Left ventricle myocardium superior (tissue), 1 donor: ENCODE measurements at regions of chr6 and their contacts with region 1.

Region 1: DNA sequence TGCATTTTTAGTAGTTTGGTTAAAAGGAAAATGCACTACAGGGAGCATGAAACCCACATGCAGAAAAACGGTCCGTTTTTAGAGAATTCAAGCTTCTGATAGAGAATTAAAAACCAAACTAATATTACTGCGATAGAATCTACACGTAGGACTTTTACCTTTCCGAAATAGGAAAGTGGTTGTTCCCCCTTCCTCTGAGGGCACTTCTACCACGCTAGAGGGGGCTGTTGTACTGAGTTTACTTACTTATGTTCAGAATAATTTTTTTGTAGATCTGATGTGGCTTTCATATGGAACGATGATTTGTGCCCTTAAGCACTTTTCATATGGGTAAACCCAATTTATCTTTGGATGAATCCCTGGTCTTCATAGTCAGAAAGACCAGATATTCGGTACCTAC is 264.3 kb upstream of the PLN start:
- DNase-seq: no peak
- ATAC-seq: peak; percentile 55

Region 2: GRCh38 chr6:118171852-118172251 is 111.9 kb before region 1 on chr6:
- intact Hi-C with region 1: no loop called
- DNase-seq: no peak
- ATAC-seq: no peak

Region 3: DNA sequence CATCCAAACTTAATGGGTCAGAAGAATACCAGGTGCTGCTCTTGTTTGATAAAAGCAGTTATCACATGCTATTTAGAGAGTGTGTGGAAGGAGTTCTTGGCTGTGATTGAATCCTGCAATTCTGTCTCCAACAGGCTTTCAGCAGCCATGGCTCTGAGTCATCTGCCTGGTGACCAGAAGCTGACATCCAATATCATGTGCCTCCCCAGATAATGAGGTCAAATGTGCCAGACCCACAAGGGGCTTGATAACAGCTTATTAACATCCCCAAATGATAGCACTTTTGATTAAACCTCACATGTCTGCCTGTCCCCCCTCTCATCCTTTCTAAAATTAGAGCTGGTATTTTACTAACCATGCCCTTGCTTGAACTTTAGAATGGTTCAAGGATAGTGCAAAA is 88.6 kb after region 1 on chr6:
- intact Hi-C with region 1: loop called (anchors 2 kb)
- DNase-seq: peak; percentile 60
- ATAC-seq: peak; percentile 92

Region 4: DNA sequence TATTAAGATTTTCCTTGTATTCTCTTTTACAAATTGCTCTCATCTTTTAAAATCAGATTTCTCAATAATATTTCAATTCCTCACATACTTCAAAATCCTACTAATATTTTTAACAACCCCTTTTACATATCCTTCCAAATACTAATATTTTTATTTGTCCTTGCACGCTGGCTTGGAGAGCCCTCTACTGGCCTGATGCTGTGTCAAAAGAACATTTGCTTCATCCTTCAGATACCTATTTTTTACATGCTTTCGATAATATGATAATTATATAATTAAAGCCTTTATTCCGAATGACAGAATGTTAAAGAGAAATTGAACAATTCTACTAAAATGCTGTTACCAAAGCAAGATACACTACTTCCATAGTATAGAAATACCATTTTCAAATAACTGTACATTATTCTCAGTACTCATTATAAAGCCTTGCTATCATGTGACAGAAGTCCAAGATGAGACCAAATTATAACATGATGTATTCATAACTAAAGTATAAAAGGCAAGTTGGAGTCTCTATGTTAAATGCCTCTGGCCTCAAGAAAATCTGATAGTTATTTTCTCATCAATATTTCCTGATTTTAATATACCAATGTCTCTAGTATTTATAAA is 225.3 kb after region 1 on chr6:
- intact Hi-C with region 1: loop called (anchors 1 kb)
- DNase-seq: peak; percentile 45
- ATAC-seq: peak; percentile 27

Region 5: GRCh38 chr6:118551063-118552053 is 267.6 kb after region 1 on chr6:
- intact Hi-C with region 1: loop called (anchors 5 kb)
- DNase-seq: no peak
- ATAC-seq: peak; percentile 55

Region 6: DNA sequence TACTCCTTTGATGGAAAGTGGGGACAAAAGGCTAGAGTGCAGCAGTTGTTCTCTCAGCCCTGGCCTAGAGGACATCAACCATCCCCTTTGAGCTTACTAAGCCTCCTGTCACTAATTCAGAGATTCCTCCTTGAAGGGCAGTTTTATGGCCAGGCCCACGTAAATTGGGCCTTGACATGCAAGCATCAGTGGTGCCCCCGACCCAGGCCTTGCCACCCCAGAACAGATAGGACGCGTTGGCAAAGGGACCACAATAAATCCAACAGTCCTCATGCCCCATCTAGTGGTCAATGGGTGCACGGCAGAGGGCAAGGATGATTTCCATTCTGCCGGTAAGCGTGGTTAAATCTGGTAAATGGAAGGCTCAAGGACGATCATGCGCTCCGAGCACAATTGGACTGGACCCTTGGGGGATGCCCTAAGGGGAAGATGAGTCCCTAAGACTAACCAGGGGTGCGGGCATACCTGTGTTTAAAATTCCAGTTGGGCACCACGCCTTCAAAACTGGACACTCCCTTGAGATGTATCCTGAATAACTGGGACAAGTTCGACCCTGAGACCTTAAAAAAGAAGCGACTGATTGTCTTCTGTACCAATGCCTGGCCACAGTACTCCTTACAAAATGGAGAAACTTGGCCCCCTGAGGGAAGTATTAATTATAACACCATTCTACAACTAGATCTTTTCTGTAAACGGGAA is 335.1 kb after region 1 on chr6:
- intact Hi-C with region 1: loop called (anchors 5 kb)
- DNase-seq: peak; percentile 52
- ATAC-seq: peak; percentile 85

Region 7: GRCh38 chr6:118776607-118777549 is 493.1 kb after region 1 on chr6:
- intact Hi-C with region 1: loop called (anchors 10 kb)
- DNase-seq: no peak
- ATAC-seq: peak; percentile 71